CD14-positive monocyte (primary cell): ENCODE measurements at regions of chr3 and their contacts with region 1.

Region 1: DNA sequence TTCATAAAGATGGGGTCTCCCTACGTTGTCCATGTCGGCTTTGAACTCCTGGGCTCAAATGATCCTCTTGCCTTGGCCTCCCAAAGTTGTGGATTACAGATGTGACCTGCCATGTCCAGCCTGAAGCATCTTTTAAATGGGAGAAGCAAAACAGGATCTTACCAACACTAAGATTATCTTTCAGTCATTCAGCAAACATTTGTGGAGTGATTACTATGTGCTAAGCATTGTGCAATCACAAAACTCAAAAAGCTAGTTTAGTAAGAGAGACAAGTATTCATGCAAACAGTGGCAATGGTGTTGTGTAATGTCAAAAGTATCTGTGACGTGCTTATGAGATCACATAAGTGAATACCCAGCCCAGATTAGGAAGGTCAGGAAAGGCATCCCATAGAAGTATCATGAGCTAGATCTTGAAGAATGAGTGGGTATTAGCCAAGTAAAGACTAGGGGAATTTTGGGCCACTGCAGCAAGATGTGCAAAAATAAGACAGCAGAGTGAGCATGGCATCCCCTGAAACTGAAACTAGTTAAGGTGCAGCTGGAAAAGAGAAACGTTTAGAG is 32.0 kb downstream of the SEC62 start:
- DNase-seq: peak; percentile 59 to 93 (median 88)
- H3K4me3 ChIP-seq: no peak overlapping the region
- H3K4me3 Mint-ChIP-seq: no peak overlapping the region
- H3K27ac ChIP-seq: peak overlapping the region in 1 of 2 donors; percentile 56
- H3K27ac Mint-ChIP-seq: peak overlapping the region in 6 of 7 donors; percentile 26 to 83 (median 78)
- H3K4me1 ChIP-seq: peaks cover 29% of the 10 kb centered on the region in 2 donors
- H3K4me1 Mint-ChIP-seq: peaks cover 33% of the 10 kb centered on the region
- H3K27me3 ChIP-seq: no peaks in the 10 kb centered on the region
- H3K27me3 Mint-ChIP-seq: peaks cover 0 to 4% (median 0%) of the 10 kb centered on the region in 3 donors
- CTCF ChIP-seq: no peak

Region 2: GRCh38 chr3:169744366-169745054 is 254.1 kb before region 1 on chr3:
- intact Hi-C with region 1: no loop called
- DNase-seq: no peak
- H3K4me3 ChIP-seq: no peak overlapping the region
- H3K4me3 Mint-ChIP-seq: no peak overlapping the region
- H3K27ac ChIP-seq: no peak overlapping the region
- H3K27ac Mint-ChIP-seq: no peak overlapping the region
- H3K4me1 ChIP-seq: no peaks in the 10 kb centered on the region
- H3K4me1 Mint-ChIP-seq: peaks cover 4% of the 10 kb centered on the region
- H3K27me3 ChIP-seq: no peaks in the 10 kb centered on the region
- H3K27me3 Mint-ChIP-seq: peaks cover 3 to 5% (median 3%) of the 10 kb centered on the region in 3 donors
- CTCF ChIP-seq: no peak

Region 3: GRCh38 chr3:170044795-170045244 is 46.2 kb after region 1 on chr3:
- intact Hi-C with region 1: loop called in 1 of 2 experiments (anchors 10 kb)
- DNase-seq: peak; percentile 66 to 89 (median 79)
- H3K4me3 ChIP-seq: peak overlapping the region; percentile 20 to 67 (median 26)
- H3K4me3 Mint-ChIP-seq: peak overlapping the region; percentile 71 to 87
- H3K27ac ChIP-seq: peak overlapping the region; percentile 75 to 95
- H3K27ac Mint-ChIP-seq: peak overlapping the region; percentile 85 to 93 (median 91)
- H3K4me1 ChIP-seq: peaks cover 26% of the 10 kb centered on the region in 2 donors
- H3K4me1 Mint-ChIP-seq: peaks cover 33% of the 10 kb centered on the region
- H3K27me3 ChIP-seq: no peaks in the 10 kb centered on the region
- H3K27me3 Mint-ChIP-seq: peaks cover 0 to 3% (median 0%) of the 10 kb centered on the region in 3 donors
- CTCF ChIP-seq: no peak